ENCODE measurements at regions of chr10 and their contacts with region 1.

Region 1: DNA sequence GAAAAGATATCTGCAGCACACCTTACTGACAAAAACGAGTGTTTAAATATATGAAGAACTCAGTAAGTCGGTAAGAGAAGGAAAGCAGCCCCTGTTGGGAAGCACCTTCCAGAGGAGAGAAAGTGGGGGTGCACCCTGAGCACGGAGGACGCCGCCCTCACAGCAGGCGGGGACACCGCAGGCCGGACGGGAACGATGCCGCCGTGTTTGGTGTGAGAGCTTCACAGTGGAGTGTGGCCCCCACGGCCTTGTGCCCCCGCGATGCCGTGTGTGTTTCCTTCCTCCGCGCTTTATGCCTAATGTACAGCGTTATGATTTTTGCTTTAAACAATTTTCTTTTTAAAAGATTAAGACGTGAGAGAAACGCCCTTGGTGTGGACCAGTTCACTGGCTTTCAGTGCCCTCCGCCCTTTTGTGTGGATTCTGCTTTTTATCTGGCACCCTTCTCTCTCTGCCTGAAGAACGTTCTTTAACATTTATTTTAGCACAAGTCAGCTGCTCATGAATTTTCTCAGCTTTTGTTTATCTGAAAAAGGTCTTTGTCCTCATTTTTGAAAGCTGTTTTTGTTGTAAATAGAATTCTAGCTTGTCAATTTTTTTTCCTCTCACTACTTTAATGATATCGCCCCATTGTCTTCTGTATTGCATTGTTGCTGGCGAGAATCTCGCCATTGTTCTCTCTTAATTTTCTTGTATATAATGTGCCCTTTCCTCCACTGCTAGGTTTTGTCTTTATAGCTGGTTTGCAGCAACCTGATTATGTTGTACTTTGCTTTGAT is 110.7 kb downstream of the INPP5A start:
- DNase-seq: peak in 5 of 10 donors; percentile 35 to 66 (median 62)
- H3K4me3 ChIP-seq: peak overlapping the region in 31 of 59 donors; percentile 1 to 49 (median 26)
- H3K27ac ChIP-seq: peak overlapping the region; percentile 68 to 100 (median 96)
- H3K27me3 ChIP-seq: no peaks in the 10 kb centered on the region
- CTCF ChIP-seq: peak in 4 of 56 donors; percentile 6 to 10 (median 8)

Region 2: DNA sequence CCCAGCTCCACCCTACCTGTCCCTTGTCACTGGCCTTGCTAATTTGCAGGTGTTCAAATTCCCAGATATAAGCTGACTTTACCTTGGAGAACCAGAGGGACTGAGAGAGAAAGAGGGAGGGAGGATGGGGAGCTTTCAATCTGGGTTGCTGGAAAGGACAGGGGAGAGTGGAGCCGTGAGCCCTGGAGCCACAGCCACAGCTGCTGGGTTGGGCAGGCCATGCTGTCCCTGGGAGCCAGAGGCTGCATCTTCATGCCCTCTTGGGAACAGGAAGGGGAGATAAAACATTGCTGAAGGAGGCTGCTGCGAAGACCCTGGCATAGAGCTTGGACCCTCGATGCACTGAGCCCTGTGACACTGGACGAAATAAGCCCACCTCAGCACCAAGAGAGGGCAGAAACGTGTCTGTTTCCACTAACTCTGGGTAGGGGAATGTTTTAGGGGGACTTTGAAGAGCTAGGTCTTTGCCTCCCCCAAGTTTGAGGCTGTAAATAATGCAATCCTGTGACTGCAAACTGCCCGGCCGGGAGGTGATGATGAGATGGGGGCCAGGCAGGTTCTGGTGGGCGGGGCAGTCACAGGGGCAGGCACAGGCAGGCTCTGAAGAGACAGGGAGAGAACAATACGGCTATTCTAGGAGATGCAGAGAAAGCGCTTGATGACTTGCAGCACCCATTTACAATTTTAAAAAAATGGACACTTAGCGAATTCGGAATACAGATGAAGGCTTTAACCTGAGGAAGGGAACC is 588.3 kb before region 1 on chr10:
- intact Hi-C with region 1: loop called in 1 of 2 experiments (anchors 5 kb)
- DNase-seq: peak in 4 of 10 donors; percentile 65 to 78 (median 70)
- H3K4me3 ChIP-seq: peak overlapping the region in 2 of 59 donors; percentile 9 to 18
- H3K27ac ChIP-seq: peak overlapping the region; percentile 13 to 100 (median 97)
- H3K27me3 ChIP-seq: no peaks in the 10 kb centered on the region
- CTCF ChIP-seq: no peak

Region 3: GRCh38 chr10:132536971-132537712 is 111.1 kb before region 1 on chr10:
- intact Hi-C with region 1: no loop called
- DNase-seq: peak; percentile 100
- H3K4me3 ChIP-seq: peak overlapping the region; percentile 60 to 93 (median 81)
- H3K27ac ChIP-seq: peak overlapping the region; percentile 9 to 96 (median 89)
- H3K27me3 ChIP-seq: no peaks in the 10 kb centered on the region
- CTCF ChIP-seq: peak in 48 of 56 donors; percentile 16 to 79 (median 46)

Region 4: DNA sequence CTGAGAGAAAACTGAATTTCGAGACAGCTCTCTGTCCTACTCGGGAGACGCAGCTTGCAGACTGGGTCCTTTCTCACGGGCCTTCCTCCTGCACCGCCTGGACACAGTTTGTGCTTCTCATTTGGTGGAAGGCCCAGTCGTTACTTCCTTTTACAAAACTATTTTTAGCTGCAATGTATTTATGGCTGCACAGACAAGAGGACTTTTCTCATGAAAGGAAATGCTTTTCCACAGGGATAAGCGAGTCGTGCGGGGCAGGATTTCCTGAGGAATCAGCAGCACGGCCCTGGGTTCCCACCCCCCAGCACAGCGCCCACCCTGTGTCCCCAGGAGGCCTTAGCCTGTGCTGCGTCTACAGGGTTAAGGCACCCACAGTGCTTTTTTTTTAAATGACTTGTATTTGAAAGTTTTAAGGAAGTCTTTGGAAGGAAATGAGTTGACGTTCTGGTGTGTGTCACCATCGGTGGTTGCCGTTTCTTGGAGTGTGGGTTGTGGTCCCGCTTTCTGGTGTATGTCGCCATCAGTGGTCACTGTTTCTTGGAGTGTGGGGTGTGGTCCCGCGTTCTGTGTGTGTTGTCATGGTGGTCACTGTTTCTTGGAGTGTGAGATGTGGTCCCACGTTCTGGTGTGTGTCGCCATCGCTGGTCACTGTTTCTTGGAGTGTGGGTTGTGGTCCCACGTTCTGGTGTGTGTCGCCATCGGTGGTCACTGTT is 59.8 kb before region 1 on chr10:
- intact Hi-C with region 1: no loop called
- DNase-seq: no peak
- H3K4me3 ChIP-seq: peak overlapping the region in 14 of 59 donors; percentile 3 to 29 (median 15)
- H3K27ac ChIP-seq: peak overlapping the region in 46 of 59 donors; percentile 8 to 79 (median 54)
- H3K27me3 ChIP-seq: no peaks in the 10 kb centered on the region
- CTCF ChIP-seq: no peak

Region 5: GRCh38 chr10:132788180-132788830 is 140.0 kb after region 1 on chr10:
- intact Hi-C with region 1: loop called in 1 of 2 experiments (anchors 2 kb)
- DNase-seq: peak in 6 of 10 donors; percentile 52 to 79 (median 59)
- H3K4me3 ChIP-seq: peak overlapping the region in 58 of 59 donors; percentile 7 to 70 (median 53)
- H3K27ac ChIP-seq: peak overlapping the region in 50 of 59 donors; percentile 22 to 92 (median 84)
- H3K27me3 ChIP-seq: peaks cover 0 to 61% (median 46%) of the 10 kb centered on the region in 45 donors
- CTCF ChIP-seq: peak in 54 of 56 donors; percentile 13 to 75 (median 48)